Activated CD4-positive, alpha-beta memory T cell treated with anti-CD3 and anti-CD28 coated beads for 36 hours (primary cell): ENCODE measurements at regions of chr17 and their contacts with region 1.

Region 1: DNA sequence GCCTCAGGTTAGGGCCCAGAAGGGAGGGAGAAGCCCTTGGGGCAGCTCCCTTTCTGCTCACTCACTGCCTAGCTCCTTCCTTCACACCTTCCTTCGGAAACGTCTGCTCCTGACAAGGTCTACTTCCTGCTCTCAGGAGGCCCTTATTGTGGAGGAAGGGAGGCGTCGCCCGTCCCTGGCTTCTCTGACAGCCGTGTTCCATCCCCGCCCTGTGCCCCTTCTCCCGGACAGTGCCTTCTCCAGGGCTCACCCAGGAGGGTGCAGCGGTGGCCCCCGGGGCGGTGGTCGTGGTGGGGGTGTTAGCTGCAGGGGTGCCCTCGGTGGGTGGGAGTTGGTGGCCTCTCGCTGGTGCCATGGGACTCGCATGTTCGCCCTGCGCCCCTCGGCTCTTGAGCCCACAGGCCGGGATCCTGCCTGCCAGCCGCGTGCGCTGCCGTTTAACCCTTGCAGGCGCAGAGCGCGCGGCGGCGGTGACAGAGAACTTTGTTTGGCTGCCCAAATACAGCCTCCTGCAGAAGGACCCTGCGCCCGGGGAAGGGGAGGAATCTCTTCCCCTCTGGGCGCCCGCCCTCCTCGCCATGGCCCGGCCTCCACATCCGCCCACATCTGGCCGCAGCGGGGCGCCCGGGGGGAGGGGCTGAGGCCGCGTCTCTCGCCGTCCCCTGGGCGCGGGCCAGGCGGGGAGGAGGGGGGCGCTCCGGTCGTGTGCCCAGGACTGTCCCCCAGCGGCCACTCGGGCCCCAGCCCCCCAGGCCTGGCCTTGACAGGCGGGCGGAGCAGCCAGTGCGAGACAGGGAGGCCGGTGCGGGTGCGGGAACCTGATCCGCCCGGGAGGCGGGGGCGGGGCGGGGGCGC is 231.9 kb downstream of the SEC14L1 start:
- DNase-seq: peak; percentile 75
- H3K4me3 Mint-ChIP-seq: peak overlapping the region; percentile 73
- H3K27ac Mint-ChIP-seq: peak overlapping the region; percentile 73
- H3K4me1 Mint-ChIP-seq: peaks cover 62% of the 10 kb centered on the region
- H3K27me3 Mint-ChIP-seq: no peaks in the 10 kb centered on the region

Region 2: GRCh38 chr17:77280980-77281903 is 91.4 kb before region 1 on chr17:
- CTCF ChIA-PET with region 1: no interaction called
- POLR2A ChIA-PET with region 1: no interaction called
- intact Hi-C with region 1: loop called (anchors 5 kb)
- DNase-seq: peak; percentile 65
- H3K4me3 Mint-ChIP-seq: peak overlapping the region; percentile 70
- H3K27ac Mint-ChIP-seq: peak overlapping the region; percentile 69
- H3K4me1 Mint-ChIP-seq: peaks cover 16% of the 10 kb centered on the region
- H3K27me3 Mint-ChIP-seq: peaks cover 22% of the 10 kb centered on the region

Region 3: GRCh38 chr17:77345260-77345910 is 27.3 kb before region 1 on chr17:
- CTCF ChIA-PET with region 1: interaction called, 11 read pairs
- POLR2A ChIA-PET with region 1: interaction called, 7 read pairs
- intact Hi-C with region 1: loop called (anchors 1 kb)
- DNase-seq: no peak
- H3K4me3 Mint-ChIP-seq: no peak overlapping the region
- H3K27ac Mint-ChIP-seq: peak overlapping the region; percentile 7
- H3K4me1 Mint-ChIP-seq: peaks cover 48% of the 10 kb centered on the region
- H3K27me3 Mint-ChIP-seq: no peaks in the 10 kb centered on the region

Region 4: GRCh38 chr17:77391668-77392375 is 19.2 kb after region 1 on chr17:
- CTCF ChIA-PET with region 1: interaction called, 26 read pairs
- POLR2A ChIA-PET with region 1: interaction called, 26 read pairs
- intact Hi-C with region 1: loop called (anchors 2 kb)
- DNase-seq: peak; percentile 78
- H3K4me3 Mint-ChIP-seq: peak overlapping the region; percentile 47
- H3K27ac Mint-ChIP-seq: peak overlapping the region; percentile 88
- H3K4me1 Mint-ChIP-seq: peaks cover 67% of the 10 kb centered on the region
- H3K27me3 Mint-ChIP-seq: no peaks in the 10 kb centered on the region

Region 5: GRCh38 chr17:77444984-77445759 is 72.5 kb after region 1 on chr17:
- CTCF ChIA-PET with region 1: no interaction called
- POLR2A ChIA-PET with region 1: interaction called, 5 read pairs
- intact Hi-C with region 1: loop called (anchors 2 kb)
- DNase-seq: peak; percentile 91
- H3K4me3 Mint-ChIP-seq: peak overlapping the region; percentile 72
- H3K27ac Mint-ChIP-seq: peak overlapping the region; percentile 98
- H3K4me1 Mint-ChIP-seq: peaks cover 91% of the 10 kb centered on the region
- H3K27me3 Mint-ChIP-seq: no peaks in the 10 kb centered on the region